Heart right ventricle (tissue), 16 donors: ENCODE measurements at regions of chr1 and their contacts with region 1.

Region 1: DNA sequence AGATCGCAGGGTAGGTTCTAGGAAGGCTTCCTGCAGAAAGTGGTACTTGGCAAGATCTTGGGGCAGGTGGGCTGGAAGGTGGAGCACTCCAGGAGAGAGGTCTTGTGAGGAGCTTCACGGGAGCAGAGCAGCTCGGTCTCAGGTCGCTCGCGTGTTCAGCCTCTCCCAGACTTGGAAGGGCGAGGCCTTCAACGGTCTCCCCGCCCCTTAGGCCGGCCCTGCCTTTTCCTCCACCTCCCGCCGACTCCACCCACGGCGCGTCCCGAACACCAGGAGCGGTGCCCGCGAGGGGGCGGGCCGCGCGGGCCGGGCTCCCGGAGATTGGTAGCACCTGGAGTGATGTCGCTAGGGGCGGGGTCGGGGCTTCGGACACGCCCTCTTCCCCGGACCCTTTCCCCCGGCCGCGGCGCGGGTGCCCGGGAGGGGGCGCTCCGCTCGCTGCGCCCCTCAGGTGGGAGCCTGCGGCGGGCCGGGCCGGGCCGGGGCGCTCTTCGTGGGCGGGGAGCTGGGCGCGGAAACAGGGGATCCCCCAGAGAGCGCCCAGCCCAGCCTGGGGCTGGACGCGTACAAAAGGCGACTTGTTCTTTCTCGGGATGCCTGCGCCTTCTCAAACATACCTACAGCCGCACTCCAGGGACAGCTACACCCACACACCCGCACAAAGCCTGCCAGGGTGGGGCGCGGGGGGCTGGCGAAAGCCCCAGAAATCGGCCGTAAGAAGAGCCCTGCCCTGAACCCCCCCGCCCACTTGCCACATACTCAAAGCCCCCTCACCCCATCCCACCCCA is 35.5 kb downstream of the AHDC1 start:
- DNase-seq: peak; percentile 94 to 95
- ATAC-seq: peak; percentile 78 to 85 (median 82)
- H3K4me3 ChIP-seq: peak overlapping the region in 9 of 10 donors; percentile 21 to 50 (median 41)
- H3K27ac ChIP-seq: peak overlapping the region; percentile 48 to 98 (median 93)
- H3K4me1 ChIP-seq: peaks cover 63 to 100% (median 95%) of the 10 kb centered on the region in 9 donors
- H3K27me3 ChIP-seq: no peaks in the 10 kb centered on the region
- CTCF ChIP-seq: peak; percentile 65 to 90 (median 76)

Region 2: DNA sequence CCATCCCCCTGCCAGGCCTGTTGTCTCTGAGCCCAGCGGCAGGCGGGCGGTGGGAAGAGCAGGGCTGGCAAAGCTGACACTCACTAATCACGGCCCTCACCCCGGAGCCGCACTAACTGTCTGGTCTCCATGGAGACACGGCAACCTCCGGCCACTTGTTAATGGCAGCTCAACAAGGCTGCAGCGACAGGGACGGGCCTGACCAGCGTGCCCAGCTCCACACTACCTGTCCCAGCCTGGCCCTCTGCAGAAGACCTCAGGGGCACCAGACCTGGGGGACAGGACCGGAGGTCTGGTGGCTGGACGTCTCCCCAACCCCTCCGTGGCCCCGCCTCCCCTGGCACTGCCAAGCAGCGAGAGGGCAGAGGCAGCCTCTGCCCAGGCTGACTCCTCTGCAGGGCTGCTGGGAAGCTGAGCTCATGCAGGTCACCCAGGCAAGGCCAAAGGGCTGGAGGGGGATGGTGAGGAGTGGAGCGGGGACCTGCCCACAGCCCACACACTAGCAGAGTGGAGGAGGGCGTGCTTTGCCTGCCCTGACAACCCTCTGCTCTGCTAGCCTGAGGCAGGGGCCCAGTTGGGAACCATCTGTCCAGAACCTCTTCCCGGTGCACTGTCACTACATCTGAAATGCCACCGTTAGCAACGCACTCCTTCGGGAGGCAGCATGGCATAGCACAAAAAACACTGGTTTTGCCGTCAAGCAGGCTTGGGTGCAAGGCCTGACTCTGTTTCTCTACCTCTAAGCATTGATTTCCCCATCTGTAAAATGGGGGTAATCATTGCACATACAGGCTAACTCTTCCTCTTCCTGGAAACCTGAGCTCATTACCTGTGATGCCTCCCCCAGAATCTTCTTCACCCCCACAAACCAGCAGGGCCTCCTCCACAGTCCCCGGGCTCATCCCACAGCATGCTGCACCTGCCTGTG is 48.9 kb before region 1 on chr1:
- intact Hi-C with region 1: loop called in 1 of 10 experiments (anchors 1 kb)
- DNase-seq: peak in 1 of 2 donors; percentile 71
- ATAC-seq: peak in 6 of 8 donors; percentile 23 to 67 (median 46)
- H3K4me3 ChIP-seq: peak overlapping the region in 1 of 10 donors; percentile 9
- H3K27ac ChIP-seq: peak overlapping the region; percentile 34 to 87 (median 74)
- H3K4me1 ChIP-seq: peaks cover 46 to 96% (median 73%) of the 10 kb centered on the region in 9 donors
- H3K27me3 ChIP-seq: no peaks in the 10 kb centered on the region
- CTCF ChIP-seq: peak in 1 of 9 donors; percentile 7

Region 3: GRCh38 chr1:27525296-27526272 is 42.9 kb before region 1 on chr1:
- intact Hi-C with region 1: loop called in 1 of 10 experiments (anchors 5 kb)
- DNase-seq: peak; percentile 87 to 89
- ATAC-seq: peak; percentile 61 to 81 (median 77)
- H3K4me3 ChIP-seq: peak overlapping the region in 9 of 10 donors; percentile 13 to 63 (median 46)
- H3K27ac ChIP-seq: peak overlapping the region; percentile 85 to 97 (median 90)
- H3K4me1 ChIP-seq: peaks cover 79 to 95% (median 90%) of the 10 kb centered on the region in 9 donors
- H3K27me3 ChIP-seq: peaks cover 0 to 6% (median 0%) of the 10 kb centered on the region in 7 donors
- CTCF ChIP-seq: no peak

Region 4: DNA sequence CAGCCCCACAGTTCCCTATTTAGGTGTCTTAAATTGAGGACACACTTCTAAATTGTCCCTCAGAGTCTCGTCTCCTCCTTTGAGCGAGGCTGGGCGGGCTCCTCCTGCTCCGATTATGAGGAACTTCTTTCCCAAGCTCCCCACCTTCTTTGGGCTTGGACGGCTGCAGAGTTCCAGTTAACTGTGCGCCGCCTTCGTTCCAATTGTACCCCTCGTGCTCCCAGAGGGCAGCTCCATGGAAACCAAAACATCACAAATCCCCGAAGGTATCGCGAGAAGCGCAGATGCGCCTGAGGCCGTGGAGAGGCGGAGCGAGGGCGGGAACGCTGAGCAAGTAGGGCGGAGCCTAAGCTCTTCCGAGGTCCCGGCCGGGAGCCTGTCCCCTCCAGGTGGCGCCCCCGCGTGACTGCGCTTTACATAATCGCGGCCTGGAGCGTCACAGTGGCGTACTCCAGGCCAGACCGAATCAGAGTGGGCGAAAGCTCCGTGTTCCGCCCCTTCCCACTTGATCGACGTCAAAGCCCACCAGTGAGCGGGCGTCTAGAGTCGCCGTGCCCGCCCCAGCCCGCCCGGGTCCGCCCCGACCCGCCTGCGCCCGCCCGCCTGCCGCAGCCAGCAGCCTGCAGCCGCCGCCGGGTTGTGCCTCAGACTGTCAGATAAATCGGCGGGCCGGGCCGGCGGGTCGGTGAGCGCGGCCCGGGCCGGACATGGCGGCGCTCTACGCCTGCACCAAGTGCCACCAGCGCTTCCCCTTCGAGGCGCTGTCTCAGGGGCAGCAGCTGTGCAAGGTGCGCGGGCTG is 157.1 kb after region 1 on chr1 and contains the start of gene FAM76A:
- intact Hi-C with region 1: no loop called
- DNase-seq: peak; percentile 99 to 100
- ATAC-seq: peak; percentile 97 to 99 (median 98)
- H3K4me3 ChIP-seq: peak within 1 kb of the TSS; percentile 70 to 98 (median 93)
- H3K27ac ChIP-seq: peak within 1 kb of the TSS; percentile 83 to 98 (median 92)
- H3K4me1 ChIP-seq: peaks cover 0 to 20% (median 16%) of the 10 kb centered on the region in 9 donors
- H3K27me3 ChIP-seq: no peaks in the 10 kb centered on the region
- CTCF ChIP-seq: peak in 8 of 9 donors; percentile 39 to 78 (median 64)
- total RNA-seq, gene FAM76A: 9.6 to 15.1 (median 13.1) TPM

Region 5: GRCh38 chr1:27807385-27807784 is 238.9 kb after region 1 on chr1:
- intact Hi-C with region 1: no loop called
- DNase-seq: no peak
- ATAC-seq: no peak
- H3K4me3 ChIP-seq: no peak overlapping the region
- H3K27ac ChIP-seq: no peak overlapping the region
- H3K4me1 ChIP-seq: no peaks in the 10 kb centered on the region
- H3K27me3 ChIP-seq: no peaks in the 10 kb centered on the region
- CTCF ChIP-seq: no peak